HepG2 (cell line): ENCODE measurements at regions of chr20 and their contacts with region 1.

Region 1: GRCh38 chr20:6295127-6295866 is 172.5 kb upstream of the FERMT1 start:
- DNase-seq: no peak
- ATAC-seq: no peak
- H3K4me3 ChIP-seq: no peak overlapping the region
- H3K27ac ChIP-seq: no peak overlapping the region
- H3K4me1 ChIP-seq: no peaks in the 10 kb centered on the region
- H3K27me3 ChIP-seq: no peaks in the 10 kb centered on the region
- CTCF ChIP-seq: no peak
- EP300 ChIP-seq: no peak
- POLR2A ChIP-seq: no peak
- RAD21 ChIP-seq: no peak

Region 2: DNA sequence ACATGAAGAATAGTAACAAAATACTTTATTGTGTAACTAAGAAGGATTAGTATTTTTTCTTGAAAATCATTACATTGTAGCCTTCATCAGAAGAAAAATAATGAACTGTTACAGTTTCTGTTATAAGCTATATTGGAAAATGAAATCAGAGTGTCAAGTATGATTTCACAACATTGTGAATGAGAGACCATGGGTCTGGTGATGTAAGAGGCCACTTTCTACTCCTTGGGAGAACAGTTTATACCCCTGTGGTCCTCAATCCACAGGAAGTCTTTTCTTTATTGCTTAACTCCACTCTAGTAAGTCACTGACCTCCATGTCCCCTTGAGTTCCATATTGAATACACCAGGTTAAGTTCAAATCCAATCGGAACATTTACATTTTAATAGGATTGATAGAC is 46.2 kb after region 1 on chr20:
- CTCF ChIA-PET with region 1: no interaction called
- POLR2A ChIA-PET with region 1: no interaction called
- in situ Hi-C with region 1: loop called (anchors 5 kb)
- intact Hi-C with region 1: no loop called
- DNase-seq: no peak
- ATAC-seq: no peak
- H3K4me3 ChIP-seq: no peak overlapping the region
- H3K27ac ChIP-seq: no peak overlapping the region
- H3K4me1 ChIP-seq: no peaks in the 10 kb centered on the region
- H3K27me3 ChIP-seq: no peaks in the 10 kb centered on the region
- CTCF ChIP-seq: no peak
- EP300 ChIP-seq: no peak
- POLR2A ChIP-seq: no peak
- RAD21 ChIP-seq: no peak

Region 3: GRCh38 chr20:6401893-6402557 is 106.7 kb after region 1 on chr20:
- CTCF ChIA-PET with region 1: no interaction called
- POLR2A ChIA-PET with region 1: no interaction called
- in situ Hi-C with region 1: no loop called
- intact Hi-C with region 1: no loop called
- DNase-seq: no peak
- ATAC-seq: no peak
- H3K4me3 ChIP-seq: no peak overlapping the region
- H3K27ac ChIP-seq: no peak overlapping the region
- H3K4me1 ChIP-seq: 0 out of 2 replicates have a peak, but pooled peaks cover 7% of the 10 kb centered on the region
- H3K27me3 ChIP-seq: no peaks in the 10 kb centered on the region
- CTCF ChIP-seq: no peak
- EP300 ChIP-seq: no peak
- POLR2A ChIP-seq: no peak
- RAD21 ChIP-seq: no peak

Region 4: DNA sequence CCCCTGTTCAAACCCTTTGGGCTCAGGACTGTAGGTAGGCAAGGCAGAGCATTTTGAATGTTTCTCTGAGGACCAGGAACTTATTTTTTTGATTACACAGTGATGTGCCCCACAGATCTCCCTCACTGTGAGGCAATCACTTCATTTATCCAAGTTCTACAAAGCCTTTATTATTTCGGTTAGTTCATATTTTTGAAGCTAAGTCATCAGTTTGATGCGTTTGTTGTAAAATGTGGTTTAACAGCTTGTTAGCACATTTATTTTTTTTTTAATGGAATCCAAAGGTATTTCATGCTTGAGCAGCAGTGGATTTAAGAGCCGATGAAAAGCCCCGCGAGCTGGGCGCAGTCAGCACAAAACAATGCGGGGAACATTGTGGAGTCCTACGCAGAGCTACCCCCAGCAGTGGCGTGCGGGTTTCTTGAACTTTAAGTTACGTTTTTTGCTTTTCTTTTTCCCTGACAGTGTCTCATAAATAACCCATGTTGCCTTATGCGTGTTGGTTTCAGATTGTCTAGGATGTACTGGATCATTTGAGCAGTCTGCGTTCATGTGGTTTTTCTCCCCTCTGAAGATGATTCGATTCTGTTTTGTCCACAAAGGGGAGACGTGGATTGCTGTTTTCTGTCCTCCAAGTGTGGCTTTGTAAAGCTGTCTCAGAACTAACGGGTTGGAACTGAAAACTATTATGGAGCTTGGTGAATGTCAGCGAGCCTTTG is 238.6 kb after region 1 on chr20:
- CTCF ChIA-PET with region 1: no interaction called
- POLR2A ChIA-PET with region 1: no interaction called
- in situ Hi-C with region 1: no loop called
- intact Hi-C with region 1: no loop called
- DNase-seq: no peak
- ATAC-seq: no peak
- H3K4me3 ChIP-seq: no peak overlapping the region
- H3K27ac ChIP-seq: no peak overlapping the region
- H3K4me1 ChIP-seq: no peaks in the 10 kb centered on the region
- H3K27me3 ChIP-seq: no peaks in the 10 kb centered on the region
- CTCF ChIP-seq: no peak
- EP300 ChIP-seq: no peak
- POLR2A ChIP-seq: no peak
- RAD21 ChIP-seq: no peak